BJ (cell line): ENCODE measurements at regions of chr9 and their contacts with region 1.

Region 1: DNA sequence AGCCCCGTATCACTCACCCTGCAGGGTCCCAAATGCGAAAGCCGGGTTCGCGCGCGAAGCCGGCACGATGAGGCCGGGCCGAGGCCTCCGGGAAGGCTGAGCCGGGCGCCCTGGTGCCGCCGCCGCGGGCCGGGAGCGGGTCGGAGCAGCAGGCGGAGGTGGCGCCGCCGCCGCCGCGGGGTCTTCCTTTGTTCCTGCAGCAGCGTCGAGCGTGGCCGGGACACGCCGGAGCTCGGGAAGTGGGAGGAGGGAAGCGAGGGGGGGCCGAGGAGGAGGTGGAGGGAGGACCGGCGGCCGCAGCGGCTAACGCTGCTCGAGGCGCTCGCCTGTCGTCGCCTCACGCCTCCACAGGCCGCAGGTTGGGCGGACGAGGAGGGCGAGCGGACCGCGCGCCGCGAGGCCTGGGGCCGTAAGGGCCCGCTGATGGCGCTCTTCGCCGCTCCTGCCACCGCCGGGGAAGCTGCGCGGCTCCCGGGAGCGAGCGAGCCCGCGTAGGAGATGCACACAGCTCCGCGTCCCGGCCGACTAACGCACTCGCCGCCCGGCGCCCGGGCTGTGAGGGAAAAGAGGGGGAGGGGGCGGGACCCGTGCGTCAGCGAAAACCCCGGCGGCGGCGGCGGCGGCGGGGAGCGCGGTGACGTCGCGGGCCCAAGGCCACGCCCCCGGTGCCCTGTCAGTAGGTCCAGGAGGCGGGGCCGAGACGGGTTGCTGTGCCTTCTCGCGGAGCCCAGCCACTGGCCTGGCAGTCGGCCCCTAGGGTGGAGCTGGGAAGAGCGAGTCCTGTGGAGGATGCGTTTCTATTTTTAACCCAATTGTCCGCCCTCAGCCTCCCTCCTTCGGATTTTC is at the start of gene ZFAND5:
- DNase-seq: peak; percentile 91
- H3K4me3 ChIP-seq: peak within 1 kb of the TSS; percentile 91
- H3K27me3 ChIP-seq: no peaks in the 10 kb centered on the region
- CTCF ChIP-seq: no peak
- polyA plus RNA-seq, gene ZFAND5: 172 and 222 TPM in 2 replicates

Region 2: GRCh38 chr9:72297516-72297915 is 67.4 kb before region 1 on chr9:
- CTCF ChIA-PET with region 1: no interaction called
- POLR2A ChIA-PET with region 1: no interaction called
- DNase-seq: no peak
- H3K4me3 ChIP-seq: no peak overlapping the region
- H3K27me3 ChIP-seq: peaks cover 3% of the 10 kb centered on the region; the same call in 1 of the 2 replicates
- CTCF ChIP-seq: no peak

Region 3: GRCh38 chr9:72554221-72554641 is 189.3 kb after region 1 on chr9:
- CTCF ChIA-PET with region 1: interaction called, 3 read pairs
- POLR2A ChIA-PET with region 1: interaction called, 18 read pairs
- DNase-seq: peak; percentile 99
- H3K4me3 ChIP-seq: no peak overlapping the region
- H3K27me3 ChIP-seq: no peaks in the 10 kb centered on the region
- CTCF ChIP-seq: no peak

Region 4: GRCh38 chr9:72577212-72577753 is 212.4 kb after region 1 on chr9:
- CTCF ChIA-PET with region 1: interaction called, 5 read pairs
- POLR2A ChIA-PET with region 1: interaction called, 11 read pairs
- DNase-seq: peak; percentile 80
- H3K4me3 ChIP-seq: no peak overlapping the region
- H3K27me3 ChIP-seq: no peaks in the 10 kb centered on the region
- CTCF ChIP-seq: no peak

Region 5: DNA sequence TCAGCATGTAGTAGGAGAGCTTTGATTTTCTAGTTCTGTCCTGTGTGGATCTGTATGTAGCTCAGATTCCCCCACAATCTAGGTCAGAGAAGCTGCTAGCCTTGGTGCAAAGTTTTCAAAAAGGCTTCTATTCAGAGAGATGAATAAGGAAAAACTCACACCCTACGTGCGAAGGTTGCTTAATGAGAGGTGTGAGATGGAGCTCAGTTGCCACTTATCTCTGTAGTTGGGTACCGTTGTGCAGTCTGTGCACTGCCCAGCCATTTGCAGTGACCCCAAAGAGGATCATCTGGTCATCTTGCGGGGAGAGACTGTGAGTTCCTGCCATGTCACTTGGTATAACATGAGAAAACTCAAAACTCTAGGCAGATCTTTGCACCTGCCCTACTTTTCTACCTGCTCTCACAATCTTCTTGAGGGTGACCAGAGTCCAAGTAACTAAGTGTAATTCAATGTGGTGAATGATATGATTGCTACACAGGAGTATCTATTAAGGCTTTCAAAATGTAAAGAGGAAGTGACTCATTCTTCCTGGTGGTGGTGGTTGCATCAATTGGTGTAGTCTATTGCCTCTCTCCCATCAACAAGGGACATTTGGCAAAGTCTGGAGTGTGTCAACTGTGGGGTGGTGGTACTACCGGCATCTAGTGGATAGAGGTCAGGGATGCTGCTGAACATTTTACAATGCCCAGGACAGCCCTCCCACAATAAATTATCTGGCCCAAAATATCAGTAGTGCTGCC is 221.7 kb after region 1 on chr9:
- CTCF ChIA-PET with region 1: interaction called, 18 read pairs
- POLR2A ChIA-PET with region 1: interaction called, 12 read pairs
- DNase-seq: peak; percentile 59
- H3K4me3 ChIP-seq: no peak overlapping the region
- H3K27me3 ChIP-seq: no peaks in the 10 kb centered on the region
- CTCF ChIP-seq: peak; percentile 35

Region 6: GRCh38 chr9:72592502-72593403 is 227.9 kb after region 1 on chr9:
- CTCF ChIA-PET with region 1: interaction called, 18 read pairs
- POLR2A ChIA-PET with region 1: interaction called, 10 read pairs
- DNase-seq: no peak
- H3K4me3 ChIP-seq: no peak overlapping the region
- H3K27me3 ChIP-seq: no peaks in the 10 kb centered on the region
- CTCF ChIP-seq: peak; percentile 68